ENCODE measurements at regions of chr11 and their contacts with region 1.

Region 1: GRCh38 chr11:69321877-69322361 is 28.0 kb downstream of the MYEOV start:
- DNase-seq: no peak
- ATAC-seq: no peak
- H3K4me3 ChIP-seq: no peak overlapping the region
- H3K27ac ChIP-seq: no peak overlapping the region
- H3K4me1 ChIP-seq: no peaks in the 10 kb centered on the region
- H3K27me3 ChIP-seq: no peaks in the 10 kb centered on the region
- CTCF ChIP-seq: no peak
- POLR2A ChIP-seq: no peak

Region 2: DNA sequence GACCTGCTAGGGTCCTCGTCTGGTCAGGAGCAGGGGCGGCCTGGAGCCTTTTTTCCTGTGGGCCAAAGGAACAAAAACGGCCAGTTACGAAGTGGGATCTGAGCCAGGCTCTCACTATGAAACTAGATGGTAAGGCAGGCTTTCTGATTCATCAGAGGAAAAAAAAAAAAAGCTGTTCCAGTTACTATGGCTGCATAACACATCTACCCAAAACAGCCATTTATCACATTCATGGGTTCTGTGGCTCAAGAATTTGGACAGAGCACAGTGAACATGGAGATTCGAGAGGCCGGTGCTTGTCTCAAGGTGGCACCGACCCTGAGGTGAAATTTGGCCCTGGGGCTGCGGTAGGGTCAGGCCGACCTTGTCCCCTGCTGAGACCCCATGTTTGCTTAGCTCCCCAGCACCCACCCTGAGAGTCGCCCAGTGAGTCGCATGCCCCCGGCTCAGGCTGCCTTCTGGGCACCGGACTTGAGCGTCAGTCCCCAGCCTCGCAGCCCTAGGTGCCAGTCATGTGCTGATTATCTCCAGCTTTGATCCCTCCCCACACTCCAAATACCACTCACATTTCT is 375.4 kb before region 1 on chr11:
- in situ Hi-C with region 1: no loop called
- intact Hi-C with region 1: no loop called
- DNase-seq: no peak
- ATAC-seq: no peak
- H3K4me3 ChIP-seq: no peak overlapping the region
- H3K27ac ChIP-seq: no peak overlapping the region
- H3K4me1 ChIP-seq: no peaks in the 10 kb centered on the region
- H3K27me3 ChIP-seq: no peaks in the 10 kb centered on the region
- CTCF ChIP-seq: no peak
- POLR2A ChIP-seq: no peak

Region 3: GRCh38 chr11:69260622-69261021 is 61.3 kb before region 1 on chr11:
- in situ Hi-C with region 1: loop called in 1 of 4 experiments (anchors 10 kb)
- intact Hi-C with region 1: no loop called
- DNase-seq: no peak
- ATAC-seq: no peak
- H3K4me3 ChIP-seq: no peak overlapping the region
- H3K27ac ChIP-seq: no peak overlapping the region
- H3K4me1 ChIP-seq: no peaks in the 10 kb centered on the region
- H3K27me3 ChIP-seq: peaks cover 0 to 3% (median 0%) of the 10 kb centered on the region in 3 donors
- CTCF ChIP-seq: no peak
- POLR2A ChIP-seq: no peak